Activated B cell treated with CpG ODN at 0.5 μM for 24 hours (primary cell): ENCODE measurements at regions of chr11 and their contacts with region 1.

Region 1: DNA sequence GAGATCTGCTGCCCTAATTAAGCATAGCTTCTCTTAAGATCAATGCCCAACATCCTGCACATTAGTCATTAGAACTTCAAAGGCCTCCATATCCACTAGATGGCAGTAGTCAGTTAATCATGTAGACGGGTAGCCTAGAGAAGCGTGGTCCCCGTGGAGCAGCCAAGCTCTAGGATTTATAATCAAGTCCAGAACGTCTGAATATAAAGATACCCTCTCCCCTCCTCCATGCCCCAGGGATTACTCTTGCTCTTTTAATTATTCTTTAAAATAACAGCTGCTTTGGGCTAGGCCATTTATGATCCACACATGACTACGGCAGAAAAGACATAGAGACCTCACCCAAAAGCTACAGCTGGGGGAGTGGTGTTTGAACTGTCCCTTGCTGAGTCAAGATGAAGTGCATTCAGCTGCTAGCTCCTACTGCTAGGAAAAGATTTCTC is 327.6 kb upstream of the PLET1 start:
- DNase-seq: no peak
- ATAC-seq: no peak
- H3K4me3 Mint-ChIP-seq: no peak overlapping the region
- H3K27ac Mint-ChIP-seq: no peak overlapping the region
- H3K4me1 Mint-ChIP-seq: no peaks in the 10 kb centered on the region
- H3K27me3 Mint-ChIP-seq: peaks cover 2% of the 10 kb centered on the region
- CTCF ChIP-seq: peak; percentile 35

Region 2: DNA sequence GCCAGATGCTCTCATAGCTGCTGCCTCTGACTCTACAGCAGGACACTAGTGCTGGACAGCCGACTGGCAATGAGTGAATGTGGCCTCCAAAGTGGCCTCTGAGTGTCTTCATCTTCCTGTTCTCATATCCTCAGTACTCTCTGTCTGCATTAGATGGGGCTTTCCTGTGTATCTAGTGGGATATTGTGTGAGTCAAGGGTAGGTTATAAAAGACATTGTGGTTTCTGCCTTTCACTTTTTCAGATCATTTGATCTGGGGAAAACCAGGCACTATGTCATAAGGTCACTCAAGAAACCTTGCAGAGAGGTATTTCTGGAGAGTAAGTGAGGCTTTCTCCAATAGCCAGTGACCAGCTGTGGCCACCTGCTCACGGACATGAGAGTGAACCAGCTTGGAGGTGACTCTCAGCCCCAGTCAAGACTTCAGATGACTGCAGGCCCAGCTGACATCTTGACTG is 39.3 kb after region 1 on chr11:
- CTCF ChIA-PET with region 1: no interaction called
- POLR2A ChIA-PET with region 1: no interaction called
- intact Hi-C with region 1: no loop called
- DNase-seq: no peak
- ATAC-seq: no peak
- H3K4me3 Mint-ChIP-seq: no peak overlapping the region
- H3K27ac Mint-ChIP-seq: no peak overlapping the region
- H3K4me1 Mint-ChIP-seq: no peaks in the 10 kb centered on the region
- H3K27me3 Mint-ChIP-seq: peaks cover 4% of the 10 kb centered on the region
- CTCF ChIP-seq: no peak

Region 3: DNA sequence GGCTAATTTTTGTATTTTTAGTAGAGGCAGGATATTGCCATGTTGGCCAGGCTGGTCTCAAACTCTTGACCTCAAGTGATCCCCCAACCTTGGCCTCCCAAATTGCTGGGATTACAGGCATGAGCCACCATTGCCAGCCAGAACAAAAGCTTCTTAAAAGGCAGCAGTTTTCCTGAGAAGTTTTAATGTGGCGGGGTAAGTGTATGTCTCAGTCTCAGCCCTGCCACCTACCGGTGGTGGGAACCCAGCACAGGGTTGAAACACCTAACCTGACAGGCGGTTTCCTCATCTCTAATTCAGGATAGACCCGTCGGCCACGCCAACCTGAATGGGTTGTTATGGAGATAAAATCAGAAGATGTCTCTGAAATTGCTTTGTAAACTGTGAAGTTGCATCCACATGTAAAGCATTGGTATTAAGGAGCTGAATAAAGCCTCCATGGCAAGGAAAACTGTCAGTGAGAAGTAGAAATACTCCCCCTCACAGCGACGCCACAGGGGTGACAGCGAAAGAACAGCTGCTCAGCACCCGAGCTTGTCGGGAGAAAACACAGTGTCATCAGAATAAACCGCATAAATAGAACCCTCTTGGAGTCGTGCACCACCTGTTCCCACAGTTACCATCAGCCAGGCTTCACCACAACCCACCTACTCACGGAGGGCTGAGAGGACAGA is 207.0 kb after region 1 on chr11:
- CTCF ChIA-PET with region 1: no interaction called
- POLR2A ChIA-PET with region 1: no interaction called
- intact Hi-C with region 1: loop called (anchors 2 kb)
- DNase-seq: no peak
- ATAC-seq: no peak
- H3K4me3 Mint-ChIP-seq: no peak overlapping the region
- H3K27ac Mint-ChIP-seq: no peak overlapping the region
- H3K4me1 Mint-ChIP-seq: no peaks in the 10 kb centered on the region
- H3K27me3 Mint-ChIP-seq: peaks cover 2% of the 10 kb centered on the region
- CTCF ChIP-seq: no peak

Region 4: DNA sequence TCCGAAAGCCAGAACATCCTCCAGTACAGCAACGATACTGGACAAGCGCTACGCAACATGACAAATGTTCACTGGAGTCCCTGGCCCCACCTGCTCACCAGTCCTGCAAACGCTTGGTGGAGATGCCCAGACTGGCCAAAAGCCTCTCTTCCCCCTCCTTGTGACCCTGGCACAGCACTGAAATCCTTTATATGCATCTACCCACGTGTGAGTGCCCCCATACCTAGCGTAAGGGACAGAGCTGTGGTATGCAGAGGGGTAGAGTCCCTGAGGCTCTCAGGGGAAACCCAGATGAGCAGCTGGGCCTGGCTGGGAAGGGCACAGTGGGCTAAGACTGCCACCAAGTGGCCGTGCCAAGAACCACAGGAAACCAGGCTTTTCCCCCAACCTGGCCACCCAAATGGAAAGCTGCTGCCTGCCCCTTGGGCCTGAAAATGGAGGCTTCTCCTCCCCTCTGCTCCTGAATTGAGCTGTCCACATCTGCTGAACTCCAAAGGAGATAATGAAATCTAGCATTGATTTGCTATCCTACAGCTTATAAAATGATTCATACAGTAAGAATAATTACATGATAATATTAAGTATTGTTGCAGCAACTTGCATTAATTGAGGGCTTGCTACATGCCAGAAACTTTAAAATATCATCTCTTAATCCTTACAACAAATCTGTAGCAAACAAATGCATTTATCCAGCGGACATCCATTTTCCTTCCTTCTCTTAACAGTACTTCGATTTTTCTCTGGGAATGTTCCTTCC is 701.3 kb after region 1 on chr11:
- CTCF ChIA-PET with region 1: interaction called, 107 read pairs
- POLR2A ChIA-PET with region 1: no interaction called
- intact Hi-C with region 1: loop called (anchors 1 kb)
- DNase-seq: peak; percentile 66
- ATAC-seq: peak; percentile 100
- H3K4me3 Mint-ChIP-seq: no peak overlapping the region
- H3K27ac Mint-ChIP-seq: no peak overlapping the region
- H3K4me1 Mint-ChIP-seq: peaks cover 2% of the 10 kb centered on the region
- H3K27me3 Mint-ChIP-seq: peaks cover 4% of the 10 kb centered on the region
- CTCF ChIP-seq: peak; percentile 83

Region 5: DNA sequence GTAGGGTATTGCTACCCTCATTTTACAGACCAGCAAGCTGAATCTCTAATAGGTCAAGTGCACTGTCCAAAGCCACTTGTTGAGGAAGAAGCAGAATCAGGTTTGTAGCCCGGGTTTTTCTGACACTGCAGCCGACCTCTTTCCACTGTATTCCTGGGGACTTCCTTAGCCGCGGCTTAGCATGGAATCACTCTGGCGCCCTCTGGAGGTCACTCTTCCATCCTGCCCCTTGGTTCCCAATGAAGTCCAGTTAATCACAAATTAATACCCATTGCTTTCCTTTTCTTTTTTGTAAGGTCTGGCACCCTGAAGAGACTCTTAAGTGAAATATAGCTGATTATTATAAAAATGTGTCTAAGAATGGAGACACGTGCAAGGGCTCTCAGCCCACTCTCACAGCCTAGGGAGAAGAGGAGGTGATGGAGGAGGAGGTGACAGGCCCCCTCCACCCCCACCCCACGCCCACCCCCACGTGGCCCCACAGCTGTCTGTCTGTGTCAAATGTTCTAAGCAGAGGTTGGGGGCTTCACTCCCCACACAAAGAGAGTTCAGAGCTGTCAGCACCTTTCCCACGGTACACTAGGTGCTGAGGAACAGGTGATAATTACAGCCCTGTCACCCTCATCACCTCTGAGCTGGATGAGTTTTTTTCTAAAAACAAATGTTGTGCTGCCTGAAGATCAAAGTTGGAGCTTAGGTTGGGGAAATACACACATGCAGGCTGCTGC is 944.6 kb after region 1 on chr11:
- CTCF ChIA-PET with region 1: no interaction called
- POLR2A ChIA-PET with region 1: no interaction called
- intact Hi-C with region 1: loop called (anchors 2 kb)
- DNase-seq: peak; percentile 24
- ATAC-seq: peak; percentile 31
- H3K4me3 Mint-ChIP-seq: no peak overlapping the region
- H3K27ac Mint-ChIP-seq: no peak overlapping the region
- H3K4me1 Mint-ChIP-seq: no peaks in the 10 kb centered on the region
- H3K27me3 Mint-ChIP-seq: peaks cover 10% of the 10 kb centered on the region
- CTCF ChIP-seq: peak; percentile 41